WTC11 (cell line): ENCODE measurements at regions of chr4 and their contacts with region 1.

Region 1: DNA sequence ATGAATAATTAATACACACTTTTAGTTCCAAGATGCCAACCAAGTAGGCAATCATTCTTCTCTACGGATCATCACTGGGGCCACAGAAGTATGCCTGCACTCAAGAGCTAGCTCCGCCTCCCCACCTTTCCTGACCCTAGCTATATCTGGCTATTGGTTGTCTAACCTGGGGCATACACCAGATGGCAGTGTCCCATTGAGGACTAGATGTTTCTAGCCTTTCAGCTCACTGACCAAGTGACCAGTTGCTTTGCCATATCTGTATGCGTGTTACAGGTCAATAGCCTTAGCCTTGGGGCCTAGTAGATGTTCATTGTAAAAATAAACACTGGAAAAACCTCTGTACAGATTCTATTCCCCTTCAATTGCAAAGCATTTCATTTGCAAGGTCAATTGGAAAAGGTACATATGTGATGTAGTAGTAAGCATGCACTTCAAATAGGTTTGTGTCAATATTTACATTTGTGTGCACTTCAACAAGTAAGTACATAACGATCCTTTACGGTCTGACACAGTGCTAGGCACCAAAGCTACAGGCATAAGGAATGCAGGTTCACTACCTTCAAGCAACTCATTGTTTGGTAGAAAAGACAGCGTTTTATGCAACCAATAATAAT is 521.7 kb downstream of the PPARGC1A start:
- DNase-seq: peak; percentile 72
- ATAC-seq: peak; percentile 97
- H3K4me3 Mint-ChIP-seq: no peak overlapping the region
- H3K27ac Mint-ChIP-seq: no peak overlapping the region
- H3K4me1 Mint-ChIP-seq: peaks cover 16% of the 10 kb centered on the region
- H3K27me3 Mint-ChIP-seq: peaks cover 23% of the 10 kb centered on the region
- CTCF ChIP-seq: peak; percentile 56

Region 2: GRCh38 chr4:23311983-23312382 is 56.2 kb before region 1 on chr4:
- CTCF ChIA-PET with region 1: no interaction called
- POLR2A ChIA-PET with region 1: no interaction called
- DNase-seq: no peak
- ATAC-seq: no peak
- H3K4me3 Mint-ChIP-seq: no peak overlapping the region
- H3K27ac Mint-ChIP-seq: no peak overlapping the region
- H3K4me1 Mint-ChIP-seq: no peaks in the 10 kb centered on the region
- H3K27me3 Mint-ChIP-seq: no peaks in the 10 kb centered on the region; the same call in 1 of the 2 replicates
- CTCF ChIP-seq: no peak

Region 3: DNA sequence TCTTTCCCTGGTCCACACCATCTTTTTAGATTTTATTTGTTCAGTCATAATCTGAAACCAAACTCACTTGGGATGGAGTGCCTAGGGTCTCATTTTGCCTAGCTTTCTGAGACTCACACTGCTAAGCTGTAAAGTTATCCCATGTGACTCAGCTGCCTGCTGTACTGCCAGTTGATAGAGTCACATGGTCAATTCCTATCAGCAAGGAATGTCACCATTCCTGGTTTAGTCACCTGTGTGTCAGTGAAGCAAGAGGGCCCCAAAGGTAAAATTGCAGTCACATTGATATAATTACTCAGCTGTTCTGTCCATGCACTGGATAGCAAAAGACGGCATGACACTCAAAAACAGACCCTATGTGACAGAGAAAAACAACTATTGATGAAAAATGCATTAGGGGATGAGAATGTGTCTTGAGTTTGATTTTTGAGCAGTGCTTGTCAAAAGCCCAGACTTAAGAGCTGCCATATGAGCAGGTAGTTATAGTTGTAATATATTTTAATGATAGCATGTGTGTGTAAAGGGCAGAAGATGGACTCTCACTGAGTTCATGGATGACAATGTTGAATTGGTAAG is 108.4 kb after region 1 on chr4:
- CTCF ChIA-PET with region 1: no interaction called
- POLR2A ChIA-PET with region 1: no interaction called
- DNase-seq: no peak
- ATAC-seq: no peak
- H3K4me3 Mint-ChIP-seq: no peak overlapping the region
- H3K27ac Mint-ChIP-seq: no peak overlapping the region
- H3K4me1 Mint-ChIP-seq: peaks cover 10% of the 10 kb centered on the region
- H3K27me3 Mint-ChIP-seq: no peaks in the 10 kb centered on the region
- CTCF ChIP-seq: no peak

Region 4: DNA sequence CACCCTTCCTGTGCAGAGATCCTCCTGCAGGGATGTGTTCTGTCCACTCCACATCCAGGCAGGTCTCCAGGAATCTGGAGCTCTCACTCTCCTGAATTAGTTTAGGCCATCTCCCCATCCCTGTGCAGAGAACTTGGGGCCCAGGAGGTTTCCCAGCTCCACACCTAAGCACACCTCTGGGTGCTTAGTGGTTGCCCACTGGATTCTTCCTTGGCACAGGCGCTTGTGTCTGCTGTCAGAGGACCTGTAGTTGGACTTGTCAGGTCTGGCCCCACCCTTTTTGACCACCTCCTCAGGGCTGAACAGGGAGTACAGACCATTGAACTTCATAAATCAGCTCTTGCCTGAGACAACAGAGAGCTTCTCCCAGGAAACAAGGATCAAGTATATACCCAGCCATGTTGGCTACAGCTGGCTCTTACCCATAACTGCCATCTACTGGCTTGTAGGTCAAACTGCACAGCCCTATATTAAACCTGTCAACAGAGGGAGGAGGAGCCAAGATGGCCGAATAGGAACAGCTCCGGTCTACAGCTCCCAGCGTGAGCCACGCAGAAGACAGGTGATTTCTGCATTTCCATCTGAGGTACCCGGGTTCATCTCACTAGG is 246.2 kb after region 1 on chr4:
- CTCF ChIA-PET with region 1: interaction called, 35 read pairs
- POLR2A ChIA-PET with region 1: interaction called, 3 read pairs
- DNase-seq: no peak
- ATAC-seq: peak; percentile 100
- H3K4me3 Mint-ChIP-seq: no peak overlapping the region
- H3K27ac Mint-ChIP-seq: no peak overlapping the region
- H3K4me1 Mint-ChIP-seq: no peaks in the 10 kb centered on the region
- H3K27me3 Mint-ChIP-seq: no peaks in the 10 kb centered on the region
- CTCF ChIP-seq: peak; percentile 26; the same call in 1 of the 2 replicates

Region 5: GRCh38 chr4:23667659-23668058 is 299.5 kb after region 1 on chr4:
- CTCF ChIA-PET with region 1: interaction called, 13 read pairs
- POLR2A ChIA-PET with region 1: no interaction called
- DNase-seq: no peak
- ATAC-seq: no peak
- H3K4me3 Mint-ChIP-seq: no peak overlapping the region
- H3K27ac Mint-ChIP-seq: no peak overlapping the region
- H3K4me1 Mint-ChIP-seq: no peaks in the 10 kb centered on the region
- H3K27me3 Mint-ChIP-seq: no peaks in the 10 kb centered on the region
- CTCF ChIP-seq: no peak